ENCODE measurements at regions of chr11 and their contacts with region 1.

Region 1: DNA sequence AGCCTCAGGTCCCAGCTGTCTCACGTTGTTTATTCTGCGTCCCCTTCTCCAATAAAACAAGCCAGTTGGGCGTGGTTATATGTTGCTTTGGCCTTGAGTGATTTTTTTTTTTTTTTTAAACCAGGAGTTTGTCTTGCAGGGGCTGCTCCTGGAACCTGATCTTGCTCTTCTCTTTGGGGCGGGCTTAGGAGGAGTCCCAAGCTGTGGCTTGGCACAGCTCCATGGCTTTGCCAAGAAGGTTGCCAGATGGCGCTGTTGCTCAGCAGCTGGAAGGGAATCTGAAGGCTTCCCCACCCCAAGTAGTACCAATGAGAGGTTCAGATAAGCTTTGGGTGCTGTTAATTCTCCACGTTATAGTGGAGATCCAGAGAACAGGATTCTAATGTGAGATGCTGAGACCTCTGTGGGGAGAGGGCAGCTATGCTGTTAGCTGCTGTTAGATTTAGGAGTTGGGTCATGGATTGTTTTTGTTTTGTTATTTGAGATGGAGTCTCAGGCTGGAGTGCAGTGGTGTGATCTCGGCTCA is 2.0 kb upstream of the FERMT3 start:
- DNase-seq: peak; percentile 94
- H3K4me3 ChIP-seq: no peak overlapping the region
- CTCF ChIP-seq: peak; percentile 80

Region 2: DNA sequence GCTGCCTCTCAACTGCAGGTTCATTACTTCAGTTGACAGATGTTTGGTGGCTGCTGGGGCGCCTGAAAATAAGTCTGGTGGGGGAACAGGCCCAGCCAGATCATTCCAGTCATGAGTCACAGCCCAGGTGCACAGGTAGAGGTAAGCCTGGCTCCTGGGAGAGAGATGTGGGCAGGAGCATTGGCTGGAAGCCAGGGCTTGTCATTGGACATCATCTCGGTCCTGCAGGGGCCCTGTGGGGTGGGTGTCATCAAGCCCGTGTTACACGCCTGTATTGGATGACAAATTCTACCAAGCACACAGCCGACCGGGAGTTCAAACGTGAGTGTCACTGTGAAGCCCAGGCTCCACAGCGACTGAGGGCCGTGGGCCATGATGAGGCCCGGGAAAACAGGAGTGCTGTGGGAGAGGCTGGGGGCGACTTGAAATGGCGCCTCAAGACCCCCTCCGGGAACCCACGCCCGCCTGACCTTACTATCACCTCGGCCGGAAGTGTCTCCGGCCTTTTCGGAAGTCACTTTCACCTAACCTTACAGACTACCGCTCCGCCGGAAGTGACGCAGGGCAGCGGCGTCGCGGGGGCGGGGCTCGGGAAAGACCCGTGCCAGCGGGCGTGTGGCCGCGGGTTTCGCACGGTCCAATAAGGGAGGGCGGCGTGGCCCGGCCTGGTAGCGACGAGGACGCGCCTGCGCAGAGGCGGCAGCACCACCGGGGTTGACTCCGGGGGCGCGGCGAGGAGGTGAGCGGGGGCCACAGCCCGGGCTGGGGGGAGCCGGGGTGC is 36.1 kb after region 1 on chr11 and contains the start of gene FKBP2:
- in situ Hi-C with region 1: no loop called
- DNase-seq: peak; percentile 92
- H3K4me3 ChIP-seq: peak within 1 kb of the TSS; percentile 92
- CTCF ChIP-seq: no peak

Region 3: DNA sequence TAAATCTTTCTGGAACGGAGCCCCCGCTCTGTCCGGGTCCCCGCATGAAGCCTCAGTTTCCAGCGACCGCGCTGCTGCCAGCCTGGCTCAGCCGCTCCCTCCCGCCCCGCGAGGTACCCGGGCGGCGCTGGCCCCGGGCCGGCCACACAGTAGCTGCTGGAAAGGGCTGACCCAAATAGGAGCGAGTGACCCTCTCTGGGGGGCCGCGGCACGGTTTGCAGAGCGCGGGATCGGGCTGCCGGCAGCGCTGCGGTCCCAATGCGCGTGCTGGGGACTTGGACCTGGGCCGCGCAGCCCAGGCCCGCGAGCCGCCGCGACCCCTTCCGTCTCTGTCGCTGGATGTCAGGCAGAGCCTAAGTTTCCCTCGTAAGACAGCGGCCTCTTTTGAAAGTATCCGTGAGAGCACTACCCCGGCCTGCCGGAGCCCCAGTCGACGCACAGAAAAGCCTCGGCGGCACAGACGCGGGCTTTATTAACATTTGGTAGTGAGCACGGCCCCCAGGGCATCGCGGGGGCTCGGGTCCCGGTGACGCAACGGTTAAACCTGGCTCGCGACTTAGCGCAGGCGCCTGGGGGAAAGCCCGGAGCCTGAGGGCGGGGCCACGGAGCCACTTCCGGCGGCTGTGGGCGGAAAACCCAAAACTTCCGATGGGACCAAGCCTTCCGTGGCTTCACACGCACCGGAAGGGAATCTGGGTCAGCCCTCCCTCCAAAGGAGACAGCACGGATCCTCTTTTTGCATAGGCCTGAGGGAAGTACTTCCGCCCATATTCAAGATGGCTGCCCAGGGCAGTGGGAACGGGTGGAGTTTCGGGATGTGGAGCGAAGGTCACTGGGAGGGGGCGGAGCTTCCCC is 65.1 kb after region 1 on chr11:
- in situ Hi-C with region 1: loop called (anchors 10 kb)
- DNase-seq: peak; percentile 100
- H3K4me3 ChIP-seq: peak overlapping the region; percentile 65
- CTCF ChIP-seq: peak; percentile 25

Region 4: DNA sequence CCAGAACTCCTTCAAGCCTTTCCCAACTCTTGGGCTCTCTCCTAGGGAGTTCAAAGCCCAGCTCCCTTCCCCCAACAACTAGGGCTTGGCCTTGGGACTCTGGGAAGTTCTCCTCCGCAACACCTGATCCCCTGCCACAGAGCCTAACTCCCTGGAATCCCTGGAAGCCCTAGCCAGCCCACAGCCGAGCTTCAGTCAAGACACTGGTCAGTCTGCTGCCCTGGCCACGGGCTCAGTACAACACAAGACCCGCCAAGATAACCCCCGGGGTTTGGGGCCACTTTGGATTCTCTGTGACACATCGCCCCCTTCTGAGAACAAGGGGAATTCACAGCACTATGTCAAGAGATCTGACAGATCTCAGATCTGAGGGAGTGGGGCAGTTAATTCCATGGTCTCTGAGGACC is 444.8 kb after region 1 on chr11:
- in situ Hi-C with region 1: loop called (anchors 25 kb)
- DNase-seq: no peak
- H3K4me3 ChIP-seq: no peak overlapping the region
- CTCF ChIP-seq: peak; percentile 44